ENCODE measurements at regions of chr22 and their contacts with region 1.

Region 1: GRCh38 chr22:19432133-19432851 is at the start of gene MRPL40:
- DNase-seq: peak; percentile 93
- ATAC-seq: peak; percentile 87
- H3K4me3 Mint-ChIP-seq: peak within 1 kb of the TSS; percentile 91
- H3K27ac Mint-ChIP-seq: peak within 1 kb of the TSS; percentile 92
- H3K4me1 Mint-ChIP-seq: peaks cover 35% of the 10 kb centered on the region
- H3K27me3 Mint-ChIP-seq: no peaks in the 10 kb centered on the region
- CTCF ChIP-seq: no peak
- total RNA-seq, gene MRPL40: 39.8 to 40.9 TPM

Region 2: DNA sequence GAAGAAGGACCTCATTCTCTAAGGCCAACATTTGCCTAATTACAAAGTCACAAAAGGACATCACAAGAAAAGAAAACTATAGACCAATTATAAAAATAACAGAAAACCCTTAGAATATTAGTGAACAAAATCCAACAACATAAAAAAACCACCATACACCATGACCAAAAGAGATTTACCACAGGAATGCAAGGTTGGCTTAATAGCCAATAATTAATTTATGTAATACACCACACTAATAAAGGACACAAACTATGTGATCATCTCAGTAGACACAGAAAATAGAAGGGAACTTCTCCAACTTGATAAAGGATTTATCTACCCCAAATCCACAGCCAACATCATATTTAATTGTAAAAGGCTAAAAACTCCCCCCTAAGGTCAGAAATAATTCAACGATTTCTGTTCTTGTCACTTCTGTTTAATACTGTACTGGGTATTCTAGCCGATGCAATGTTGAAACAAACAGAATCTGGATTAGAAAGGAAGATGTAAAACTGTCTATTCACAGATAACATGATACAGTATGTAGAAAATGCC is 165.7 kb before region 1 on chr22:
- CTCF ChIA-PET with region 1: no interaction called
- POLR2A ChIA-PET with region 1: no interaction called
- intact Hi-C with region 1: no loop called
- DNase-seq: no peak
- ATAC-seq: no peak
- H3K4me3 Mint-ChIP-seq: no peak overlapping the region
- H3K27ac Mint-ChIP-seq: no peak overlapping the region
- H3K4me1 Mint-ChIP-seq: no peaks in the 10 kb centered on the region
- H3K27me3 Mint-ChIP-seq: no peaks in the 10 kb centered on the region
- CTCF ChIP-seq: no peak

Region 3: DNA sequence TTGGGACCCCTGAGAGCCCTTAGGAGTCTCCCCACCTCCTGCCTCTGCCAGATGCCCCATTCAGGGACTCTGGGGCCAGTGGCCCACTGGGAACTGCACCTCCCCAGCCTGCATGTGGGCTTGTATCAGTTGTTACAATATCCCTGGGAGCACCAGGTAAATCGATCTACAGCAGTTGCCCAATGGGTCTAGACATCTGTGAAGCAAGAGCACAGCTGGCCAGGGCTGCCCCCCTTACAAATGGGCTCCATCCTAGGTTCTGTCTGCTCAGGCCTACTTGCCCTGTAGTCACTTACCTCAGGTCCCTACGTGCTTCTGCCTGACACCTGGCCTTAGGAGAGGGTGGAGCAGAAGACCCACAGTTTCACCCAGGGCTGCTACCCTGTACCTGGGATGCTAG is 63.4 kb before region 1 on chr22:
- CTCF ChIA-PET with region 1: no interaction called
- POLR2A ChIA-PET with region 1: no interaction called
- intact Hi-C with region 1: no loop called
- DNase-seq: no peak
- ATAC-seq: no peak
- H3K4me3 Mint-ChIP-seq: no peak overlapping the region
- H3K27ac Mint-ChIP-seq: no peak overlapping the region
- H3K4me1 Mint-ChIP-seq: no peaks in the 10 kb centered on the region
- H3K27me3 Mint-ChIP-seq: no peaks in the 10 kb centered on the region
- CTCF ChIP-seq: no peak

Region 4: GRCh38 chr22:19383292-19383691 is 49.0 kb before region 1 on chr22:
- CTCF ChIA-PET with region 1: no interaction called
- POLR2A ChIA-PET with region 1: no interaction called
- intact Hi-C with region 1: no loop called
- DNase-seq: no peak
- ATAC-seq: no peak
- H3K4me3 Mint-ChIP-seq: no peak overlapping the region
- H3K27ac Mint-ChIP-seq: no peak overlapping the region
- H3K4me1 Mint-ChIP-seq: no peaks in the 10 kb centered on the region
- H3K27me3 Mint-ChIP-seq: no peaks in the 10 kb centered on the region
- CTCF ChIP-seq: no peak

Region 5: GRCh38 chr22:19419464-19420178 is 12.7 kb before region 1 on chr22:
- CTCF ChIA-PET with region 1: no interaction called
- POLR2A ChIA-PET with region 1: interaction called, 51 read pairs
- intact Hi-C with region 1: no loop called
- DNase-seq: peak; percentile 69
- ATAC-seq: peak; percentile 94
- H3K4me3 Mint-ChIP-seq: peak overlapping the region; percentile 22
- H3K27ac Mint-ChIP-seq: peak overlapping the region; percentile 86
- H3K4me1 Mint-ChIP-seq: peaks cover 59% of the 10 kb centered on the region
- H3K27me3 Mint-ChIP-seq: no peaks in the 10 kb centered on the region
- CTCF ChIP-seq: no peak

Region 6: GRCh38 chr22:19447388-19448075 is 15.2 kb after region 1 on chr22 and contains the start of gene C22orf39:
- CTCF ChIA-PET with region 1: interaction called, 5 read pairs
- POLR2A ChIA-PET with region 1: interaction called, 109 read pairs
- intact Hi-C with region 1: no loop called
- DNase-seq: peak; percentile 91
- ATAC-seq: peak; percentile 87
- H3K4me3 Mint-ChIP-seq: peak within 1 kb of the TSS; percentile 77
- H3K27ac Mint-ChIP-seq: peak within 1 kb of the TSS; percentile 92
- H3K4me1 Mint-ChIP-seq: peaks cover 37% of the 10 kb centered on the region
- H3K27me3 Mint-ChIP-seq: no peaks in the 10 kb centered on the region
- CTCF ChIP-seq: no peak
- total RNA-seq, gene C22orf39: 26.9 to 29.8 TPM